ENCODE measurements at regions of chr17 and their contacts with region 1.

Region 1: GRCh38 chr17:48037036-48037837 is at the start of gene COPZ2:
- DNase-seq: peak; percentile 57
- H3K4me3 Mint-ChIP-seq: peak within 1 kb of the TSS; percentile 81
- H3K27ac Mint-ChIP-seq: peak within 1 kb of the TSS; percentile 41
- H3K4me1 Mint-ChIP-seq: peaks cover 10% of the 10 kb centered on the region
- H3K27me3 Mint-ChIP-seq: peaks cover 38% of the 10 kb centered on the region
- total RNA-seq, gene COPZ2: 5.7 and 5.9 TPM in 2 replicates

Region 2: DNA sequence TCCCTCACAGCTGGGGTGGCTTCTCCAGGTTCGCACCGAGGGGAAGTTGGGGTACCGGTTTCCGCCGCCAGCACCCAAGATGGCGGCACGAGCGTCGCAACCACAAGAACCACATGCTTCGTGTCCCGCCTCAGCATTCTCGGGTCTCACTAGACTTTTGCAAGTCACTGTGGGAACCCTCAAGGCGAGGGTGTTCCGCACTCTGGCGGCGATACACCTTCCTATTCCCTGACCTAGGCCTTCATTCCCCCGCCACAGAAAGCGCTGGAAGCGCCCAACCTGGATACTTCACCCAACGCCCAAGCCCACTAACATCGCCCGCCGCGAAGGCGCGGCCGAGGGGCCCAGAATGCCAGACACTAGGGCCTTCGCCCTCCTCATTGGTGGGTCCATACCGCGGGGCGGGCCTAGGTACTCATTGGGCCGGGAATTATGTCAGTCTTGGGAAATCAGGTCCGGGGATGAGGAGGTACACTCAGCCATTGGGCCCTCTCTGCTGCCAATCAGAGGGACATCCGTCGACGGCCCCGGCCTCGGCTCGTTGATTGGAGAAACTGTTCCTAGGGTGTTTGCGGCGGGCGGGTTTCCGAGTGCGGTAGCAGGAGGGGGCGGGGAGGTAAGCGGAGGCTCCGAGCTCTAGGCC is 10.6 kb after region 1 on chr17 and contains the start of gene NFE2L1:
- intact Hi-C with region 1: loop called (anchors 1 kb)
- DNase-seq: peak; percentile 98
- H3K4me3 Mint-ChIP-seq: peak within 1 kb of the TSS; percentile 95
- H3K27ac Mint-ChIP-seq: peak within 1 kb of the TSS; percentile 99
- H3K4me1 Mint-ChIP-seq: peaks cover 38% of the 10 kb centered on the region
- H3K27me3 Mint-ChIP-seq: no peaks in the 10 kb centered on the region
- total RNA-seq, gene NFE2L1: 66.2 and 71.3 TPM in 2 replicates

Region 3: DNA sequence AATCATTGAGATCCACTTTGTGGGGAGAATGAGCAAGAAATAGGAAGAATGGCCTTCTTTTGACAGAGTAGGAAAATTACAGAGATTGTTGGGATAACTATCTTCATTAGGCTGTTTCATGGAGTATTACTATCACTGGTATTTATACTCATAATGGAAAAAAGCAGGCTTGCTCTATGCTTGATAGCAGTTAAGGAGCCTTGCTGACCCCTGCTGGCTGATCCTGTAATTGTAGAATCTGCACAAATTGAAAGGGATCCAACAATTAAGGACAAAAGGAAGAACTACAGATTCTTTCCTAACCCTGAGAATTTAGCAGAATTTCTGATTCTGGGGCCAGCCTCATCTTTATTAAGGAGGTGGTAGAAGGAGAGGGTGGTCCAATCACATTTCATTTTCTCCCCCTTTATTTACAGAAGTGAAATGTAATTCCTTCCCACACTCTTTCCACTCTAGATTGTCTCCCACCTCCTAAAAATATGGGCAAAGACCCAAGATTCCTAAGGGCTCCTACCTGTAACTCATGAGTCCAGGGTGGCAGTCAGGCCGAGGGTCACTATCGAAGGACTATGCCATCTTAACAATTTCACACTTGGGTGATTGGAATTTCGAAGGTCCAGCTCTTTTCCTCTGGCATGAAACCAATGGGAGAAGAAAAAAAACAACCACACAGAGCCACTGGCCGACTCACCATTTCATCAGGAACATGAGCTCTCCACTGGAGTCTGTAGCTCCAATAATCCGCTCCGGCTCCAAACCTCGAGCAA is 37.3 kb after region 1 on chr17:
- intact Hi-C with region 1: loop called (anchors 2 kb)
- DNase-seq: peak; percentile 50
- H3K4me3 Mint-ChIP-seq: no peak overlapping the region
- H3K27ac Mint-ChIP-seq: no peak overlapping the region
- H3K4me1 Mint-ChIP-seq: peaks cover 5% of the 10 kb centered on the region
- H3K27me3 Mint-ChIP-seq: no peaks in the 10 kb centered on the region

Region 4: DNA sequence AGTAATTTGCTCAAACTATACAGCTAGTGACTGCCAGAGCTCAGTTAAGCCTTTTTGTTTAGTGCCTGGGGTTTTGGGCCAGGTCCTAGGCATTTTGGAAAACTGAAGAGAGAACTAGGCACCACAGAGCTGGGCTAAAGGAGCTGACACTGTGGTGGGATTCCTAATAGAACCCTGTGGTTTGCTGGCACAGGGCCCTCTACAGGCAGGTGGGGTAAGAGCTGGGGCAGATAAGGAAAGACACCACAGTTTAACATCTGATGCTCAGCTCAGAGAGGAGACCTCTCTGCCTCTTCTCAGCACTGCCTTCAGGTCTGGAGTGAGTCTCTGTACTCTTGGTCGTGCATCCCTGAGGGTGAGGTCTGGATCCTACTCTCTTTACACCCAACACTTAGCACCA is 191.5 kb after region 1 on chr17:
- intact Hi-C with region 1: no loop called
- DNase-seq: no peak
- H3K4me3 Mint-ChIP-seq: no peak overlapping the region
- H3K27ac Mint-ChIP-seq: no peak overlapping the region
- H3K4me1 Mint-ChIP-seq: peaks cover 16% of the 10 kb centered on the region
- H3K27me3 Mint-ChIP-seq: no peaks in the 10 kb centered on the region

Measured in activated T-helper 2 cell treated with anti-CD3 and anti-CD28 coated beads, Interferon-gamma antibody, Interleukin-2, Interleukin-4, amounts not matched to agents 10 μg/mL and 5 μg/mL and 100 μg/mL, durations not matched to agents 14 hours and 24 hours and 36 hours (primary cell).